IMR-90 (cell line): ENCODE measurements at regions of chr11 and their contacts with region 1.

Region 1: DNA sequence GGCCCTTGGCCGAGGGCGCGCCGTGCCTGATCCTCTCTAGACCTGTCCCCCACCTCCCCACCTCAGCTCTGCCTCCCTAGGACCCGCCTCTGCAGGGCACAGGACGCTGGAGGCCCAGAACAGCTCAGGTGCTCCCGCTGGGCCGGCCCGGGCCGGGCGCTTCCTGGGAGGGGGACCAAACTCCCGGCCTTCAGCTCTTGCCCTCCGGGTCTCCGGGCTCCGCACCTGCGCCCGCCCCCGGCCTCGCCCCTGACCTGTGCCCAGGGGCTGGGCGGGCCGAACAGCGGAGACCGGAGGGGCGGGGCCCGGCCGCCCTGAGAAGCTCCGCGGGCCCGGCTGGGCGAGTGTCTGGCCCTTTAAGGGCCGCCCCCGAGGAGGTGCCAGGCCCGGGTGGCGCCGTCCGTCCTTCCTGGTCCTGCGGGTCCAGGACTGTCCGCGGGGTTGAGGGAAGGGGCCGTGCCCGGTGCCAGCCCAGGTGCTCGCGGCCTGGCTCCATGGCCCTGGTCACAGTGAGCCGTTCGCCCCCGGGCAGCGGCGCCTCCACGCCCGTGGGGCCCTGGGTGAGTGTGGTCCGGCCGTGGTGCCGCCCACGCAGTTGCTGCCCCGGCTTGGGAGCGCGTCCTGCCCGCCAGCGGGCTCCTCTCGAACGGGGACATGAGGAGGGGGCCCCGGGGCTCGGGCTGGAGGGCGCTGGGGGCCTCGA is at the start of gene SSH3:
- DNase-seq: peak; percentile 34
- ATAC-seq: peak; percentile 78
- H3K4me3 ChIP-seq: peak within 1 kb of the TSS; percentile 100
- H3K27ac ChIP-seq: peak within 1 kb of the TSS; percentile 88
- H3K4me1 ChIP-seq: peaks cover 18% of the 10 kb centered on the region
- H3K27me3 ChIP-seq: no peaks in the 10 kb centered on the region
- CTCF ChIP-seq: no peak
- POLR2A ChIP-seq: no peak
- RAD21 ChIP-seq: no peak
- total RNA-seq, gene SSH3: 7.3 and 7.8 TPM in 2 replicates

Region 2: GRCh38 chr11:67288452-67289225 is 14.6 kb before region 1 on chr11:
- CTCF ChIA-PET with region 1: interaction called, 3 read pairs
- POLR2A ChIA-PET with region 1: interaction called, 3 read pairs
- dilution Hi-C with region 1: no loop called
- in situ Hi-C with region 1: no loop called
- intact Hi-C with region 1: loop called (anchors 2 kb)
- DNase-seq: peak; percentile 88
- ATAC-seq: peak; percentile 80
- H3K4me3 ChIP-seq: peak overlapping the region; percentile 74
- H3K27ac ChIP-seq: peak overlapping the region; percentile 94
- H3K4me1 ChIP-seq: peaks cover 21% of the 10 kb centered on the region
- H3K27me3 ChIP-seq: no peaks in the 10 kb centered on the region
- CTCF ChIP-seq: peak; percentile 56
- POLR2A ChIP-seq: peak; percentile 85
- RAD21 ChIP-seq: peak; percentile 40